Activated T-helper 2 cell treated with anti-CD3 and anti-CD28 coated beads, Interferon-gamma antibody, Interleukin-2, Interleukin-4, amounts not matched to agents 10 μg/mL and 5 μg/mL and 100 μg/mL, durations not matched to agents 14 hours and 24 hours and 36 hours (primary cell): ENCODE measurements at regions of chr6 and their contacts with region 1.

Region 1: GRCh38 chr6:14743465-14744211 is 502.2 kb upstream of the JARID2 start:
- DNase-seq: peak; percentile 73
- H3K4me3 Mint-ChIP-seq: peak overlapping the region; percentile 61
- H3K27ac Mint-ChIP-seq: peak overlapping the region; percentile 100
- H3K4me1 Mint-ChIP-seq: peaks cover 79% of the 10 kb centered on the region
- H3K27me3 Mint-ChIP-seq: no peaks in the 10 kb centered on the region

Region 2: GRCh38 chr6:14423330-14423729 is 320.3 kb before region 1 on chr6:
- intact Hi-C with region 1: loop called (anchors 1 kb)
- DNase-seq: no peak
- H3K4me3 Mint-ChIP-seq: no peak overlapping the region
- H3K27ac Mint-ChIP-seq: peak overlapping the region; percentile 78
- H3K4me1 Mint-ChIP-seq: peaks cover 42% of the 10 kb centered on the region
- H3K27me3 Mint-ChIP-seq: no peaks in the 10 kb centered on the region

Region 3: GRCh38 chr6:14784596-14785492 is 41.2 kb after region 1 on chr6:
- intact Hi-C with region 1: loop called (anchors 5 kb)
- DNase-seq: peak; percentile 13
- H3K4me3 Mint-ChIP-seq: peak overlapping the region; percentile 18
- H3K27ac Mint-ChIP-seq: peak overlapping the region; percentile 80
- H3K4me1 Mint-ChIP-seq: peaks cover 46% of the 10 kb centered on the region
- H3K27me3 Mint-ChIP-seq: no peaks in the 10 kb centered on the region

Region 4: GRCh38 chr6:14831937-14832336 is 88.3 kb after region 1 on chr6:
- intact Hi-C with region 1: no loop called
- DNase-seq: no peak
- H3K4me3 Mint-ChIP-seq: no peak overlapping the region
- H3K27ac Mint-ChIP-seq: no peak overlapping the region
- H3K4me1 Mint-ChIP-seq: peaks cover 4% of the 10 kb centered on the region
- H3K27me3 Mint-ChIP-seq: no peaks in the 10 kb centered on the region

Region 5: DNA sequence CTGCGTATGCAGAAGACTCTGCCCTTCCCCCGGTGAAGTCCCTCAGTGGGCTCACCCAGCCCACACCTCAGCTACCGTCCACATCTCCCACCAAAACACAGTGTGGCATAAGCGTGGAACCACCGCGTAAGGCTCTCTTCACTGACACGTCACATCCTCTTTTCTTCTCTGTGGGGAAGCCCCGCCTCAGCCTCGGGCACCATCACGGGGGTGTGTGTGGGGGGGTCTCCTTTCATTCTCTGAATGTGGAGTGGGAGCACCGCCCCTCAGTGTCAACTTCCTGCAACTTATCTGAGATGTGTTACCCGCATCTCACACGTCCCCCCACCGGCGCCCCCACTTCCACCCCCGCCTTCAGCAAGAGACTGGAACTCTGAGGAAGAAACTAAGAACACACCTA is 113.9 kb after region 1 on chr6:
- intact Hi-C with region 1: loop called (anchors 1 kb)
- DNase-seq: peak; percentile 18
- H3K4me3 Mint-ChIP-seq: peak overlapping the region; percentile 19
- H3K27ac Mint-ChIP-seq: peak overlapping the region; percentile 92
- H3K4me1 Mint-ChIP-seq: peaks cover 46% of the 10 kb centered on the region
- H3K27me3 Mint-ChIP-seq: no peaks in the 10 kb centered on the region

Region 6: DNA sequence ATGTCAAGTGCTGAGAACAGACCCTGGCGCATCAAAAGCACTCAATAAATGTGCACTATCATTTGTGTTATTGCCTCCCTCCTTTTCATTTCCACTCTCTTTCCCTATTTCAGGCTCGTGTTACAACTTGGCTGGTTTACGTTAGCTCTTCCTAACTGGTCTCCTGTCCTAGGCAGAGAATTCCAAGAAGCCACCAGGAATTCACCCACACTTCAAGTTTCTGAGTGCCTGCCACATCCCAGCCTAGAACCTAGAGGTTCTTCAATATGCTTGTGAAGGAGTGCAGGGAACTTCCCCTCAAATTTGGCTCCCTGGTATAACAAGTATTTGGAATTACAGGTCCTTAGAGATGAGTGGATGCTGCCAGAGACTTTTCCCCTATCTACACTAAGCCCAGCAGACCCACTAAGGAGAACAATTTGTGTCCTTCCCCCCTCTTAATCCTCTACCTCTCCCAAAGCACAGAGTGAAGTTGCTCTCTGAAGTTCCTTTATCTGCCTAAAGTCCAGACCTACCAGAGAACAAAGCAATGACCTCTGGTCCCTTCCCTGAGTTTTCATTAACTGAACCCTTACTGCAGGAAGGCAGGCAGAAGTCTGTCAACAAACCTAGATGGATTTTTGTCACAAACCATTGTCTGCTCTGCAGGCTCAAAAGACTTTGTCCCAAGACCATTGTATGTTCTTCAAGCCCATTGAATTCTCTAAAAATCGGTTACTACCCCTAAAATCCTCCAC is 300.7 kb after region 1 on chr6:
- intact Hi-C with region 1: no loop called
- DNase-seq: no peak
- H3K4me3 Mint-ChIP-seq: no peak overlapping the region
- H3K27ac Mint-ChIP-seq: no peak overlapping the region
- H3K4me1 Mint-ChIP-seq: peaks cover 3% of the 10 kb centered on the region
- H3K27me3 Mint-ChIP-seq: no peaks in the 10 kb centered on the region

Region 7: DNA sequence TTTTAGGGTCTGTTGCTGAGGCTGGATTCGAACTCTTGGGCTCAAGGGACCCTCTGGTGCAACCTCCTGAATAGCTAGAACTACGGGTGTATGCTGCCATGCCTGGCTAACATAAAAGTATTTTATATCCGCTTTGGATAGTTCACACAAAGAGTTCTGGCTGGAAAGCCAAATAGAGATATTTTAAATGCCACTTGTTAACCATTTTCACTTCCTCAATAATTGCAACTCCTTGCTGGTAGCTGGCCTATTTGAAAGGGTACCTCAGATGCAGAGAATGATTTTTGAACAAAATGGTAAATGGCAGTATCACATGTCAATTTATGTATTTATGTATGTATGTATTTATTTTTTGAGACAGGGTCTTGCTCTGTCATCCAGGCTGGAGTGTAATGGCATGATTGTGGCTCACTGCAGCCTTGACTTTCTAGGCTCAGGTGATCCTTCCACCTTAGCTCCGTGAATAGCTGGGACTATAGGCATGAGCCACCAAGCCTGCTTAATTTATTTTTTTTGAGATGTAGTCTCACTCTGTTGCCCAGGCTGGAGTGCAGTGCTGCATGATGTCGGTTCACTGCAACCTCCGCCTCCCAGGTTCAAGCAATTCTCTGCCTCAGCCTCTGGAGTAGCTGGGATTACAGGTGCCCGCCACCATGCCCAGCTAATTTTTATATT is 489.3 kb after region 1 on chr6:
- intact Hi-C with region 1: no loop called
- DNase-seq: no peak
- H3K4me3 Mint-ChIP-seq: no peak overlapping the region
- H3K27ac Mint-ChIP-seq: no peak overlapping the region
- H3K4me1 Mint-ChIP-seq: no peaks in the 10 kb centered on the region
- H3K27me3 Mint-ChIP-seq: no peaks in the 10 kb centered on the region

Region 8: GRCh38 chr6:15299430-15300131 is 555.9 kb after region 1 on chr6:
- intact Hi-C with region 1: loop called (anchors 5 kb)
- DNase-seq: peak; percentile 46
- H3K4me3 Mint-ChIP-seq: peak overlapping the region; percentile 53
- H3K27ac Mint-ChIP-seq: peak overlapping the region; percentile 68
- H3K4me1 Mint-ChIP-seq: peaks cover 74% of the 10 kb centered on the region
- H3K27me3 Mint-ChIP-seq: no peaks in the 10 kb centered on the region